PC-3 (cell line): ENCODE measurements at regions of chr1 and their contacts with region 1.

Region 1: GRCh38 chr1:200184196-200184595 is 156.7 kb downstream of the NR5A2 start:
- DNase-seq: peak; percentile 100
- ATAC-seq: peak; percentile 64
- H3K4me3 ChIP-seq: peak overlapping the region; percentile 1; the same call in 1 of the 2 replicates
- H3K27ac ChIP-seq: peak overlapping the region; percentile 63
- H3K4me1 ChIP-seq: peaks cover 54% of the 10 kb centered on the region
- H3K27me3 ChIP-seq: no peaks in the 10 kb centered on the region
- CTCF ChIP-seq: no peak

Region 2: DNA sequence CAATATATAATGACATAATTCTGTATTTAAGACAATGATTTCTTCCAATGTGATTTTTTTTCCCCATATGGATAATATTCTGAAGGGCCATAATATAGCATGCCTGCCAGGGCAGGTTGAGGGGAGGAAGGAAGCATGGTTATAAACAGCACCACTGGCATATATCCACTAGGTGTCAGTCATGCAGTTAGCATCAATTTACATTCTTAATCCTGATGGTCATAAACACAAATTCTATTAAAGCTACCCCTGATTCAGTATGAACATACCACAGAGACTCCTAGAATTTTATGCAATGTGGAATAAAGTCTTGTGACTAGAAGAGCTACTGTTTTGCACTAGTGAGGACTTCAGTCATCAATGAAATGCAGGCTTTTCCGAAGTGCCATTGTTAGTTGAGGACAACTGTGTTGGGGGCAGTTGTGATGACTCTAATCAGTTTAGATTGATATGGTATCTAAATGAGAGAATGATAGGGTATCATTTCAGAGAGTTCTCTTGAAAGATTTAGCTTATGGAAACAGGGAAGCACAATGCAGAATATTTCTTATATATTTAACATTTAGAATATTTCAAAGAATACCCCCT is 499.4 kb before region 1 on chr1:
- CTCF ChIA-PET with region 1: no interaction called
- POLR2A ChIA-PET with region 1: no interaction called
- intact Hi-C with region 1: loop called (anchors 1 kb)
- DNase-seq: peak; percentile 80
- ATAC-seq: peak; percentile 84
- H3K4me3 ChIP-seq: no peak overlapping the region
- H3K27ac ChIP-seq: no peak overlapping the region
- H3K4me1 ChIP-seq: peaks cover 13% of the 10 kb centered on the region
- H3K27me3 ChIP-seq: no peaks in the 10 kb centered on the region
- CTCF ChIP-seq: peak; percentile 79

Region 3: GRCh38 chr1:199859491-199859933 is 324.7 kb before region 1 on chr1:
- CTCF ChIA-PET with region 1: no interaction called
- POLR2A ChIA-PET with region 1: no interaction called
- intact Hi-C with region 1: loop called (anchors 5 kb)
- DNase-seq: peak; percentile 98
- ATAC-seq: peak; percentile 97
- H3K4me3 ChIP-seq: no peak overlapping the region
- H3K27ac ChIP-seq: peak overlapping the region; percentile 3
- H3K4me1 ChIP-seq: peaks cover 24% of the 10 kb centered on the region
- H3K27me3 ChIP-seq: peaks cover 3% of the 10 kb centered on the region; the same call in 1 of the 2 replicates
- CTCF ChIP-seq: no peak

Region 4: DNA sequence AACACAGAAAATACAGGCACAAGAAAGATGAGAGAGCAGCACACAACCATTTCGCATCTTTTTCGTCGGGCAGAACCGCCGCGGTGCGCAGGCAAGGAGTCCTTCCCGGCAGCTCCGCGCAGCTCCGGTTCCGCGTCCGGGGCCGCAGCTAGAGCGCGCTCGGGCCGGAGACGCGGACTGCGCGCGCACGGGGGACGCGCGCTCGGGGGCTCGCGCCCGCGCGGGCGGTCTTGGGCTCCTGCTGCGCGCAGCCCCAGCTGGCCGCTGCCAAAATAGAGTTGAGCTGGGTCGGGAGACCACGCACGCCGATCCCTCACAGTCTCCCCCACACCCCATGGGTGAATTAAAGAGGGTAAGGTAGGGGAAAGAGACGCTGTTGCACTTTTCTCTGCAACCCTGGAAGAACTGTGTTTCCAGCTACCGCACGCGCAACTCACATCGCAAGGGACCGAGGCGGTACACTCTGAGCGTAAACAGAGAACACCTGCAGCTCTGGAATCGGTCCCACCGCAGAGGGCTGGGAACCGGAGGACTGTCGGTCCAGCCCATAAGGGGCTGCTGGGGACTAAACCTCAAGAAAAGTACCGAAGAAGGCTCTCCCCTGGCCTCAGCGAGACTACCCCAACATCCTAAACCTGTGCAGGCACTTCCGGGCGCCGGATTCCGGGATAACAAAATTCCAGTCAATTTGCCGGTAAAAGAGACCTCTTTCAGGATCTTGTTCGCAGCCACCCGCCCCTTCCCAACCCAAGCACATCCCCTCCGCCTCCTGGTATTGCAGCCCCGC is 155.0 kb before region 1 on chr1:
- CTCF ChIA-PET with region 1: interaction called, 3 read pairs
- POLR2A ChIA-PET with region 1: no interaction called
- intact Hi-C with region 1: loop called (anchors 2 kb)
- DNase-seq: peak; percentile 94
- ATAC-seq: peak; percentile 90
- H3K4me3 ChIP-seq: peak overlapping the region; percentile 65
- H3K27ac ChIP-seq: no peak overlapping the region
- H3K4me1 ChIP-seq: peaks cover 12% of the 10 kb centered on the region
- H3K27me3 ChIP-seq: peaks cover 51% of the 10 kb centered on the region
- CTCF ChIP-seq: no peak

Region 5: GRCh38 chr1:200075938-200076550 is 108.2 kb before region 1 on chr1:
- CTCF ChIA-PET with region 1: no interaction called
- POLR2A ChIA-PET with region 1: no interaction called
- intact Hi-C with region 1: loop called (anchors 2 kb)
- DNase-seq: peak; percentile 100
- ATAC-seq: peak; percentile 96
- H3K4me3 ChIP-seq: peak overlapping the region; percentile 8; the same call in 1 of the 2 replicates
- H3K27ac ChIP-seq: no peak overlapping the region
- H3K4me1 ChIP-seq: peaks cover 14% of the 10 kb centered on the region
- H3K27me3 ChIP-seq: peaks cover 13% of the 10 kb centered on the region
- CTCF ChIP-seq: no peak

Region 6: GRCh38 chr1:200118779-200119505 is 65.3 kb before region 1 on chr1:
- CTCF ChIA-PET with region 1: no interaction called
- POLR2A ChIA-PET with region 1: no interaction called
- intact Hi-C with region 1: no loop called
- DNase-seq: no peak
- ATAC-seq: peak; percentile 59
- H3K4me3 ChIP-seq: no peak overlapping the region
- H3K27ac ChIP-seq: no peak overlapping the region
- H3K4me1 ChIP-seq: no peaks in the 10 kb centered on the region
- H3K27me3 ChIP-seq: no peaks in the 10 kb centered on the region
- CTCF ChIP-seq: no peak

Region 7: GRCh38 chr1:200139661-200140250 is 44.4 kb before region 1 on chr1:
- CTCF ChIA-PET with region 1: interaction called, 3 read pairs
- POLR2A ChIA-PET with region 1: no interaction called
- intact Hi-C with region 1: loop called (anchors 1 kb)
- DNase-seq: peak; percentile 93
- ATAC-seq: peak; percentile 100
- H3K4me3 ChIP-seq: no peak overlapping the region
- H3K27ac ChIP-seq: no peak overlapping the region
- H3K4me1 ChIP-seq: no peaks in the 10 kb centered on the region
- H3K27me3 ChIP-seq: no peaks in the 10 kb centered on the region
- CTCF ChIP-seq: peak; percentile 100

Region 8: GRCh38 chr1:200258447-200259375 is 74.5 kb after region 1 on chr1:
- CTCF ChIA-PET with region 1: no interaction called
- POLR2A ChIA-PET with region 1: no interaction called
- intact Hi-C with region 1: loop called (anchors 2 kb)
- DNase-seq: peak; percentile 82
- ATAC-seq: peak; percentile 99
- H3K4me3 ChIP-seq: no peak overlapping the region
- H3K27ac ChIP-seq: no peak overlapping the region
- H3K4me1 ChIP-seq: no peaks in the 10 kb centered on the region
- H3K27me3 ChIP-seq: no peaks in the 10 kb centered on the region
- CTCF ChIP-seq: peak; percentile 90

Region 9: GRCh38 chr1:200428482-200429205 is 244.4 kb after region 1 on chr1:
- CTCF ChIA-PET with region 1: no interaction called
- POLR2A ChIA-PET with region 1: no interaction called
- intact Hi-C with region 1: no loop called
- DNase-seq: peak; percentile 62
- ATAC-seq: peak; percentile 53
- H3K4me3 ChIP-seq: no peak overlapping the region
- H3K27ac ChIP-seq: peak overlapping the region; percentile 1
- H3K4me1 ChIP-seq: peaks cover 28% of the 10 kb centered on the region
- H3K27me3 ChIP-seq: no peaks in the 10 kb centered on the region
- CTCF ChIP-seq: no peak